GM18951 (cell line): ENCODE measurements at regions of chr12 and their contacts with region 1.

Region 1: DNA sequence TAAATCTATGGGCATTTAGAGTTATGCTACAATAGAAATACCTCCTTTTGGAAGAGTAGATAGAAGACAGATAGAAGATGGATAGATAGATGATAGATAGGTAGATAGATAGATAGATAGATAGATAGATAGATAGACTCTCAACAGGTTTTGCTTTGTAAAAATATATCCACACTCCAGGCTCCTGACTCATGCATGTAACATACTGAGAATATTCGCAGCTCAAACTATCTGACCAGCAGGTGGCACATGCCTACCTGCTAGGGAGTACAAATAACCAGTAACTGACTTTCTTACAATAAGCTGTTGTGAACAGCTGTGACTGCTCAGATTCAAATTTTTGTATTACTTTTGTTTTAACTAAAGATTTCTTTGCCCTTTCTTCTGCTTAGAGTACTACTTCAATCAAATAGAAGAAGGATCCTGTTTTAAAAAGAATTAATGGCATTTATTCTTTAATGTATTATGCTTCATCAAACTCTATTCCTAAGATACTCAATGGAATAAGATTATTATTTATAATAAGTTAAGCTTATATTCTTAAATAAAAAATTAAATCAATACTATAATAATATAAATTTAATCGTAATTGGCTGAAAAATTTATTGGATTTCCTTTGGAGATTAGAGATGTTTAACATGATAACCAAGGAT is 15.8 kb upstream of the CPNE8 start:
- POLR2A ChIP-seq: no peak

Region 2: GRCh38 chr12:39081910-39082309 is 160.8 kb after region 1 on chr12:
- in situ Hi-C with region 1: loop called (anchors 10 kb)
- POLR2A ChIP-seq: no peak